Activated naive CD8-positive, alpha-beta T cell treated with anti-CD3 and anti-CD28 coated beads, Interleukin-2, amount 10 ng/mL, durations not matched to agents 7 days and 5 days (primary cell): ENCODE measurements at regions of chr10 and their contacts with region 1.

Region 1: GRCh38 chr10:63268798-63269503 is 135.8 kb downstream of the NRBF2 start:
- DNase-seq: peak; percentile 68
- ATAC-seq: peak; percentile 97
- H3K4me3 Mint-ChIP-seq: peak overlapping the region; percentile 96
- H3K27ac Mint-ChIP-seq: peak overlapping the region; percentile 98
- H3K4me1 Mint-ChIP-seq: peaks cover 15% of the 10 kb centered on the region
- H3K27me3 Mint-ChIP-seq: no peaks in the 10 kb centered on the region

Region 2: DNA sequence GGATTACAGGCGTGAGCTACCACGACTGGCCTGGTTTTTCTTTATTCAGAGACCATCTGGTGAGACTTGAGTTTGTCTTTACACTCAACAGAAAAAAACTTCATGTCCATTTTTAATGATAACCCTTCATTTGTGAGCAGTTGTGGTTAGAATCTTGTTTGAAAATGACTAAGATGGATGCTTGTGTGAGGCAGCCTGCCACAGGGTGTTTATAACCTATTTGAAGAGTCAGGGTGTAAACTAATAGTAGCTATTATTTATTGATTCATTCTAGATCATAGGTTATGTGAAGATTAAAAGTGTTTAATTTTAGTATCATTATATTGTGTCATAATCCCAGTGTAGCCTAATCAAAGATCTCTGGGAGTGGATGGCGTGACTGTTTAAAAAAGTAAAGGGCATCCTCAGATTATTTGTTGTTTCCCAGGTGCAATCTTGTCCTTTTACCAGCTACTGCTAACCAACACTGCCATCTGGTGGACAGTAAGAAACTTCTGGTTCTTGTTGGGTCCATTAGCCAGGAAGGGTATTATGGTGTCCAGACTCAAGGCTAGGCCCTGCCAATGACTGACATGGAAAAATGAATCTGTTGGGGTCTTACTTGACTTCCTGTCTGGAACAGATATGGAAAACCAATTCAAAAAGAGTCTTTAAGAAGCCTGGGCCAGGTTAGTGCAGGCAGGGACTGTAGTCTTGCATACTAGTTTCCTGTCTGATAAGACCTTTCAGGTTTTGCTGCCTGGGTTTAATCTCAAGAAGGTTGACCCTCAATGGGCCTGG is 110.9 kb before region 1 on chr10:
- POLR2A ChIA-PET with region 1: no interaction called
- DNase-seq: no peak
- ATAC-seq: peak; percentile 67
- H3K4me3 Mint-ChIP-seq: no peak overlapping the region
- H3K27ac Mint-ChIP-seq: no peak overlapping the region
- H3K4me1 Mint-ChIP-seq: peaks cover 15% of the 10 kb centered on the region
- H3K27me3 Mint-ChIP-seq: no peaks in the 10 kb centered on the region

Region 3: DNA sequence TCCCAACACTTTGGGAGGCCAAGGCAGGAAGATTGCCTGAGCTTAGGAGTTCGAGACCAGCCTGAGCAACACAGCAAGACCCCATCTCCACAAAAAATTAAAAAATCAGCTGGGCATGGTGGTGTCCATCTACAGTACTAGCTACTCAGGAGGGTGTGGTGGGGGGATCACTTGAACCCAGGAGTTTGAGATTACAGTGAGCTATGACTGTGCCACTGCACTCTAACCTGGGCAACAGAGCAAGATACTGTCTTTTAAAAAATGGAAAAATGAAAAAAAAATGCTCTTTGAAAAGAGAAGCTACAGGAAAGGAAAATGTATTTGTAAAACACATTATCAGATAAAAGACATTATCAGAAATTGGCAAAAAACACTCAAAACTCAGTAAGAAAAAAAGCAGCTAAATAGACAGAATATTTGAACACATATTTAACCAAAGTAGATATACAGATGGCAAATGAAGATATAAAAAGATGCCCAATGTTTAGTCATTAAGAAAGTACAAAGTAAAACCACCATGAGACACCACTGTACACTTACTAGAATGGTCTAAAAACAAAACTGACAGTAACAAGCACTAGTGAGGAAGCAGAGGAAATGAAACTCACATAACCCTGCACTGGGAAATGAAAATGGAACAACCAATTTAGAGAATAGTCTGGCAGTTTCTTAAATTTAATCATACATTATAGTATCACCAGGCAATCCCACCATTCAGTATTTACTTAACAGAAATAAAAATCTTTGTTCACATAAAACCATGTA is 95.3 kb before region 1 on chr10:
- POLR2A ChIA-PET with region 1: interaction called, 11 read pairs
- DNase-seq: no peak
- ATAC-seq: peak; percentile 98
- H3K4me3 Mint-ChIP-seq: peak overlapping the region; percentile 68
- H3K27ac Mint-ChIP-seq: peak overlapping the region; percentile 94
- H3K4me1 Mint-ChIP-seq: peaks cover 54% of the 10 kb centered on the region
- H3K27me3 Mint-ChIP-seq: no peaks in the 10 kb centered on the region

Region 4: DNA sequence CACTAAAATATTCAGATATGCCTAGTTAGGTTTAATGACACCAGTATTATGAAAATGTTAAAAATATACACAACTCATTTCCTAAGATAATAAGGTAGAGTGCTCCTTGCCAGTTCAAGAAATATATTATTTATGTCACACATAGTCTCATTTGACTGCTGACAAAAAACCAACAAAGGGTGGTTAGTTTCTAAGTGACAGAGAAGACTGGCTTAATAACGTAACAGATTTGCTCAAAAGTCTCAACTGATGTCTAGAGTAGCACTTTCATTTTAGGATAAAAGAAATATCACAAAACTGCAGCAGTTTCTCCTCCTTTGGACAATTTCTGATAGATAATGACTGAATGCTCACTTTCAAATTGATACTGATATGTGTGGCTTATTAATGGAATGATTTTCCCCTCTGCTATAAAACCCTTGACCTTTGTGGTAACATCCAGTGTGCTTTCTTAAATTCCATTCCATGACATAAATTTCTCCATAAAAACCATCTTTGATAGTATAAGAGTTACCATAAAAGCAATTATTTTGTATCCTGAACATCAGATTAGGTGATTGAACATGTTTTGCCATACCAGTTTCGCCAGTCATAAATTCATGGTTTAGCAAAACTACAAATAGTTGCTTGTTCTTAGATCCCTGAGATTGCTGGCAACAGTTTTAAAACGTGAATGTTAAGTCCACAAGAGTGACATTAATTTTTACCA is 41.6 kb before region 1 on chr10:
- POLR2A ChIA-PET with region 1: interaction called, 21 read pairs
- DNase-seq: no peak
- ATAC-seq: peak; percentile 26
- H3K4me3 Mint-ChIP-seq: peak overlapping the region; percentile 73
- H3K27ac Mint-ChIP-seq: peak overlapping the region; percentile 87
- H3K4me1 Mint-ChIP-seq: peaks cover 35% of the 10 kb centered on the region
- H3K27me3 Mint-ChIP-seq: no peaks in the 10 kb centered on the region

Region 5: GRCh38 chr10:63256009-63256773 is 12.8 kb before region 1 on chr10:
- POLR2A ChIA-PET with region 1: interaction called, 10 read pairs
- DNase-seq: no peak
- ATAC-seq: no peak
- H3K4me3 Mint-ChIP-seq: no peak overlapping the region
- H3K27ac Mint-ChIP-seq: no peak overlapping the region
- H3K4me1 Mint-ChIP-seq: peaks cover 40% of the 10 kb centered on the region
- H3K27me3 Mint-ChIP-seq: no peaks in the 10 kb centered on the region

Region 6: GRCh38 chr10:63521416-63522276 is 252.7 kb after region 1 on chr10:
- POLR2A ChIA-PET with region 1: interaction called, 20 read pairs
- DNase-seq: peak; percentile 79
- ATAC-seq: peak; percentile 61
- H3K4me3 Mint-ChIP-seq: peak overlapping the region; percentile 80
- H3K27ac Mint-ChIP-seq: peak overlapping the region; percentile 83
- H3K4me1 Mint-ChIP-seq: peaks cover 50% of the 10 kb centered on the region
- H3K27me3 Mint-ChIP-seq: no peaks in the 10 kb centered on the region

Region 7: GRCh38 chr10:63629363-63630084 is 360.6 kb after region 1 on chr10:
- POLR2A ChIA-PET with region 1: interaction called, 33 read pairs
- DNase-seq: peak; percentile 82
- ATAC-seq: peak; percentile 60
- H3K4me3 Mint-ChIP-seq: peak overlapping the region; percentile 92
- H3K27ac Mint-ChIP-seq: peak overlapping the region; percentile 92
- H3K4me1 Mint-ChIP-seq: peaks cover 31% of the 10 kb centered on the region
- H3K27me3 Mint-ChIP-seq: peaks cover 4% of the 10 kb centered on the region